Motor neuron (in vitro differentiated cells): ENCODE measurements at regions of chr11 and their contacts with region 1.

Region 1: DNA sequence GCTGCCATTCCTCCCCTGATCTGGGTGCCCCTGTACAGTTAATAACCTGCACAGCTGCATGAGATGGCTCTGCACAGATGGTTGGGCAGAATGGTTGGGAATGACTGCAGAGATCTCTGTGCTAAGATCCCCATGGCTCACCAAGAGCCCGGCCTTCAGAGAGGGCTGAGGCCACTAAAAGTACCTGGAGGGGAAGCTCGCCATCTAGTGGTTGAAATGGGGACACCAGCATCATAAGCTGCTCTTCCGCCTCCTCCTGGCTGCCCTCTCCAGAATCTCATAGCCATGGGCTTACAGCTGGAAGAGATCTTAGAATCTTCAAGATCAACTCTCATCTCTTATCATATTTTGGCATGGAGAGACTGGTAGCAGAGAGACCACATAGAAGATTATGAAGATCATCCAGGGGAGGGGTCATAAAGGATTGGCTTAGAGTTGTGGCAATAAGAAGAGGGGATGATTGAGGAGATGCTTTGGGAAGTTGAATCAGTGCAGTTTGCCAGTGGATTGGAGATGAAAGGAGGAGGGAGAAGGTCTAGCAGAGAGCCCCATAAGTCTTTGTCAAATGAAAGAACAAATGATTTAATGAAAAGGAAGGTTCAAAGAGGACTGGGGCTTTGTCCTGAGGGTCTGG is 22.0 kb upstream of the TLCD5 start:
- ATAC-seq: peak; percentile 8 to 72 (median 42)
- H3K4me3 ChIP-seq: no peak overlapping the region
- H3K27ac ChIP-seq: no peak overlapping the region
- H3K4me1 ChIP-seq: no peaks in the 10 kb centered on the region

Region 2: DNA sequence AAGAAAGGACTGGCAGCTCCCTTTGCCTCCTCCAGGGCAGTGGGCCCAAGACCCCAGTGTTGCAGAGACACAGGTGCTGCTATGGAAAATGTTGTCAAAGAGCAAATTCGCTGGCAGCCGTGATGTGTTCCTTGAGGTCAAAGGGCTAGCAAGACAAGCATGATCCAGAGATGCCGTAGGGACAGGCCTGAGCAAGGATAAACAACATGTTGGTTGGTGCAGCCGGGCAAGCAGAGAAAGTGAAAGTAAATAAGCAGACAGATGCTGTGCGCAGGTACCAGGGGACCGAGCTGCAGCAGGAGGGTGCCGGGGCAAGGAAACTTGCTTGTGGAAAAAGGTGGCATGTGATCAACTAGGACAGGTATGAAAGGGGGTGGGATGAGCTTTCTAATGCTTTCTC is 448.6 kb before region 1 on chr11:
- in situ Hi-C with region 1: no loop called
- ATAC-seq: peak in 1 of 8 experiments; percentile 30
- H3K4me3 ChIP-seq: no peak overlapping the region
- H3K27ac ChIP-seq: no peak overlapping the region
- H3K4me1 ChIP-seq: peaks cover 2 to 5% of the 10 kb centered on the region in 2 donors

Region 3: DNA sequence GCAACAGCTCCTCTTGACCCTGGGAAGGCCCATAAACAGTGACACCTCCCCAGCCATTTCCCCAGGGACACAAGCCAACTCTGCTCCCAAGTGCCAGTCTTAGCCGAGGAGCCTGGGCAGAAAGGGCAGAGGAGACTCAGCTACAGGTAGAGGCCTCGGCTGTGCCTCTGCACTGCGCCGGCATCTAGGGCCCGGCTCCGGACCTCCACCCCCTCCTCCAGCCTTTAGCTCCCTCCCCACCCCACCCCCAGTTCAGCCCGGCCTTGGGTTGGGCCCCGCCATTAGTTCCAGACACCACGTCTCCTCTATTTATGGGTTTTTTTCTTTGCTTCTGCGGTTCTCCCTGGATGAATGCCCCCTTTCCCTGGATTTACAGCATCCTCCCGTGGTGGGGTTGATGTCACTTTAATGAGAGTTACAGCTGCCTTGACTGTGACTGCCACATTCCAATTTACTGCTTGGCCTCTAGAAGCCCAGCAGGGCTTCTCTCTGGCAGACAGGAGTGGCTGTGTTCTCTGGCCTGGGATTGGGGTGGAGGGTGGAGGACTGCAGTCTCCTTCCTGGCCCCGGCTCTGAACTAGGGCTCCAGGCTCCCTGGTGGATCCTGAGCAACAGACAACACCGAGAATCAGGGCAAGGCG is 105.8 kb before region 1 on chr11:
- in situ Hi-C with region 1: no loop called
- ATAC-seq: peak in 7 of 8 experiments; percentile 9 to 93 (median 31)
- H3K4me3 ChIP-seq: no peak overlapping the region
- H3K27ac ChIP-seq: peak overlapping the region in 1 of 2 donors; percentile 40
- H3K4me1 ChIP-seq: peaks cover 36 to 39% of the 10 kb centered on the region in 2 donors

Region 4: GRCh38 chr11:120235024-120235861 is 67.9 kb before region 1 on chr11:
- in situ Hi-C with region 1: loop called in 2 of 9 experiments (anchors 10 kb)
- ATAC-seq: peak in 6 of 8 experiments; percentile 2 to 72 (median 60)
- H3K4me3 ChIP-seq: no peak overlapping the region
- H3K27ac ChIP-seq: no peak overlapping the region
- H3K4me1 ChIP-seq: no peaks in the 10 kb centered on the region

Region 5: DNA sequence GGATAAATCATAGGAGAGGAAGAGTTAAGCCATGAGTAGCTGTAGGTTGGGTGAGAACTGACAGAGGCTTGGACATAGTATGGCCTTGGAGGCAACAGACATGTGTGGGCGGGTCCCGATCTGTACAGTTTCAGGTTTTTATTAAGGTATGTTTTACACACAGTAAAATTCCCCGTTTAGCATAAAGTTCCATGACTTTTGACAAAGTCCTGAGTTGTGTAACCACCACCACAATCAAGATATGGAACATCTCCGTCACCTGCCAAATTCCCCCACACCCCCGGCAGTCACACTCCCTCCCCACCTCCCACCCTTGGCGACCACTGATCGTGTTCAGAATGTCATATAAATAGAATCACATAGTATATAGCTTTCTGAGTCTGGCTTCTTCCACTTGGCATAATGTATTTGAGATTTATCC is 276.5 kb after region 1 on chr11:
- in situ Hi-C with region 1: no loop called
- ATAC-seq: no peak
- H3K4me3 ChIP-seq: no peak overlapping the region
- H3K27ac ChIP-seq: no peak overlapping the region
- H3K4me1 ChIP-seq: peaks cover 2 to 9% of the 10 kb centered on the region in 2 donors